ENCODE measurements at regions of chr1 and their contacts with region 1.

Region 1: DNA sequence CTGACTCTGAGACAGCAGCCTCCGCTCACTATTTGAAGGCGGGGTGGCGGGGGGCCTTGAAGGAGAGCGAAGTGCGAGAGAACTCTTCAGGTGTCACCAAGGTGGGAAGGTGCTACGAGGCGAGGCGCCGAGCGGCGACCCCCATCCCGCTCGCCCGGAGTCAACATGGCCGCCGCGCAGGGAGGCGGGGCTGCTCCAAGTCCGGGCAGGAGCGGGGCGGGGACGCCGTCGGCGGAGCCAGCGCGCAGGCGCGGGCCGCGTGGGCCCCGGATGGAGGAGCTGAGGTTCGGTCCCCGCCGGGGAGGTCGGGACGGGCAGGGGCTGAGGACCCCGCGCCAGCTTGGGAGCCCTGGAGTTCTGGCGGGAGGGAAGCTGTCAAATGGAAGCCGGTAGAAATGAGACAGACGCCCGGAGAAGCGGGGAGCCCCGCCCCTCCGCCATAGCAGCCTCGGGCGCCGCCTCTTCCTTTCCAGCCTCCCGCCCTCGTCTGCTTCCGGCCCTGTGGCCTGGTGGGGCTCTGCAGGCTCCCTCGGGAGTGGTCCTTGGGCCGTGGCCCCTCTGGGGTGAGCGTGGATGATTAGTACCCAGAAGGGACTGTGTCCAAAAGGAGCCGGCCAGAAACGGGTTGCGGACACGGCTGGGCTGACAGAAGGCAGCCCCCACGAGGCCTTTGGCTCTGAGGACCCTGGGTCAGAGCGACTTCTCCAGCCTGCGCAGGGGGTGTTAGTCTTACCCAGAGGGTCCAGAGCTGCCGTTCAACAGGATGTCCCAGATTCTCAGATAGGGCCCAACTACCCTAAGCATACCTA is at the start of gene PIGV:
- DNase-seq: peak; percentile 74 to 96 (median 90)
- ATAC-seq: peak; percentile 72 to 77
- H3K4me3 Mint-ChIP-seq: peak within 1 kb of the TSS; percentile 83 to 100 (median 98)
- H3K27ac Mint-ChIP-seq: peak within 1 kb of the TSS; percentile 99 to 100 (median 100)
- H3K4me1 Mint-ChIP-seq: peaks cover 44 to 80% (median 69%) of the 10 kb centered on the region in 4 donors
- H3K27me3 Mint-ChIP-seq: no peaks in the 10 kb centered on the region
- polyA plus RNA-seq, gene PIGV: 8.2 to 14.4 (median 9.6) TPM

Region 2: GRCh38 chr1:26284597-26285360 is 503.1 kb before region 1 on chr1:
- POLR2A ChIA-PET with region 1: no interaction called
- DNase-seq: peak; percentile 72 to 97 (median 88)
- ATAC-seq: peak; percentile 67 to 81
- H3K4me3 Mint-ChIP-seq: peak overlapping the region; percentile 68 to 95 (median 89)
- H3K27ac Mint-ChIP-seq: peak overlapping the region; percentile 96 to 100 (median 98)
- H3K4me1 Mint-ChIP-seq: peaks cover 55 to 94% (median 91%) of the 10 kb centered on the region in 4 donors
- H3K27me3 Mint-ChIP-seq: no peaks in the 10 kb centered on the region

Region 3: DNA sequence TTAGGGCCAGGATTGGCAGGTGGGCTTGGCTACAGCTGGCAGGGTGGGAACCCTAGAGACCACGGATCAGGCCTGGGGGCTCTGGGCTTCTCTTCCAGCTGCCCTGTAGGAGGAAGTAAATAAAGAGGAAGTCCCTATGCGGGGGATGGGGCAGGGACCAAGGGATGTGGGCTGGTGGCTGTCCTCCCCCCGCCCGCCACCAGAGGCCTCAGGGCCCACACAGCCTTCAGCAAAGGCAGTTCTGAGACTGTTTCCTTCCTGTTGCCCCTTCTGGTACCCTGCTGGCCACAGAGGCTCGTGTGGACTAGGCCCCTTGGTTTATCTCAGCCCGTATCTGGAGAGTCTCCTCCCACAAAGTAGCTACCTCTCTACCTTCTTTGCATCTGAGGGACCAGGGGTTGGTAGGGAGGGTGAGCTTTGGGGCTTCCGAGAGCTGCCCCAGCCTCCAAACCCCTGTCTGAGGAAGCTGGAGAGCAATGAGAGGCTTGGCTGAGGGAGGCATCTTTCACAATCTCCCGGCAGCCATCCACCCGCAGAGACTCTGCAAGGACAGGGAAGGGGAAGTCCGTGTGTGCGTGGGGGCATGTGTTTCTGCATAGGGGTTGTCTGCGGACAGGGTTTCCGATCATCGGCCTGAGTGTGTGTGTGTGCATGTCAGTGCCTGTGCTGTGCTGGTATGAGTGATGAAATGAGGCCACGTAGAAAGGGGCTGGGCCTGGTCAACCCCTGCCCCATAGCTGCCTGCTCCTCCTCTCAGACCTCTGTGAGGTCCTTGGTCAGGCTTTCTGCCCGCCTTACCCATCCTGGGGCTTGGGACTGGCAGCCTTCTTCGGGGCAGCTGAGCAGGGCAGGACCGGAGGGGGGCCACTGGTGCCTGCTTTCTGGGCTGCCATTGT is 245.8 kb before region 1 on chr1:
- POLR2A ChIA-PET with region 1: interaction called, 12 read pairs
- DNase-seq: peak; percentile 30 to 85 (median 69)
- ATAC-seq: peak; percentile 71
- H3K4me3 Mint-ChIP-seq: peak overlapping the region; percentile 74 to 91 (median 83)
- H3K27ac Mint-ChIP-seq: peak overlapping the region; percentile 91 to 99 (median 96)
- H3K4me1 Mint-ChIP-seq: peaks cover 51 to 96% (median 89%) of the 10 kb centered on the region in 4 donors
- H3K27me3 Mint-ChIP-seq: no peaks in the 10 kb centered on the region

Region 4: DNA sequence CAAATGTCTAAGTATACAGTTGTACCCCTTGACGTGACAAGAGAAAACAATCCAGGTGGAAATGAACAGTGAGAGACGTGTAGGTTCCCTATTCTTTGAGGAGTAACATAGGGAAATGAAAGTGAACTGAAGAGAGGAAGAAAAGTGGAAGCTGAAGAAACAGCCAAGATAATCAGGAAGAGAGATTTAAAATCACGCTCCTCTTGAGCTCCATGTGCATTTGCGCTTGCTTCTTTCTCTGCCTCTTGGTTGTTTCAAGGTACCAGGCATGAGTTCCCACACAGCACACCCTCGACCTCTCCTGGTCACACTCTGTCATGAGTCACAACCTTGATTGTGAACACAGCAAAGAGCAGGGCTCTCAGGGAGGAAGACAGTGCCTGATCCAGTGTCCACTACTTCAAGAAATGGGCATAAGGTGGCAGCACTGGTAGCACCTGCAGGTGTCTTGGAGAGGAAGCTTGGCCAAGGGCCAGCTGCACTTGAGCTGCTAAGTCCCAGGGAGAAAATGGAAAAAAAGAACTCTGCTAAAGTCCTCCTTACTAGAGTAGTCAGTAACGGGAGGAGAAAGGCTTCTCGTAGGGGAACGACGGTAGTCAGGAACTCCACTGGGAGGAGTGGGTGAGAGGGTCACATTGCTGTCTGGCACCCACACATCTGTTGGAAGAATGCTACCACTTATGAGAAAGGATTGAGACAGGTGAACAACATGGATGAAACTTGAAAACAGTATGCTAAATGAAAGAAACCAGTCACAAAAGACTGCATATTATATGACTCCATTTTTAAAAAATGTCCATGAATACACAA is 110.4 kb before region 1 on chr1:
- POLR2A ChIA-PET with region 1: interaction called, 20 read pairs
- DNase-seq: peak; percentile 36 to 84 (median 54)
- ATAC-seq: peak; percentile 97 to 99
- H3K4me3 Mint-ChIP-seq: peak overlapping the region; percentile 19 to 81 (median 54)
- H3K27ac Mint-ChIP-seq: peak overlapping the region; percentile 29 to 94 (median 78)
- H3K4me1 Mint-ChIP-seq: peaks cover 6 to 24% (median 19%) of the 10 kb centered on the region in 4 donors
- H3K27me3 Mint-ChIP-seq: no peaks in the 10 kb centered on the region

Region 5: GRCh38 chr1:26723013-26723991 is 64.6 kb before region 1 on chr1:
- POLR2A ChIA-PET with region 1: interaction called, 17 read pairs
- DNase-seq: peak; percentile 14 to 71 (median 35)
- ATAC-seq: peak; percentile 62 to 80
- H3K4me3 Mint-ChIP-seq: peak overlapping the region; percentile 61 to 88 (median 78)
- H3K27ac Mint-ChIP-seq: peak overlapping the region; percentile 4 to 93 (median 82)
- H3K4me1 Mint-ChIP-seq: peaks cover 48 to 96% (median 86%) of the 10 kb centered on the region in 4 donors
- H3K27me3 Mint-ChIP-seq: no peaks in the 10 kb centered on the region

Region 6: DNA sequence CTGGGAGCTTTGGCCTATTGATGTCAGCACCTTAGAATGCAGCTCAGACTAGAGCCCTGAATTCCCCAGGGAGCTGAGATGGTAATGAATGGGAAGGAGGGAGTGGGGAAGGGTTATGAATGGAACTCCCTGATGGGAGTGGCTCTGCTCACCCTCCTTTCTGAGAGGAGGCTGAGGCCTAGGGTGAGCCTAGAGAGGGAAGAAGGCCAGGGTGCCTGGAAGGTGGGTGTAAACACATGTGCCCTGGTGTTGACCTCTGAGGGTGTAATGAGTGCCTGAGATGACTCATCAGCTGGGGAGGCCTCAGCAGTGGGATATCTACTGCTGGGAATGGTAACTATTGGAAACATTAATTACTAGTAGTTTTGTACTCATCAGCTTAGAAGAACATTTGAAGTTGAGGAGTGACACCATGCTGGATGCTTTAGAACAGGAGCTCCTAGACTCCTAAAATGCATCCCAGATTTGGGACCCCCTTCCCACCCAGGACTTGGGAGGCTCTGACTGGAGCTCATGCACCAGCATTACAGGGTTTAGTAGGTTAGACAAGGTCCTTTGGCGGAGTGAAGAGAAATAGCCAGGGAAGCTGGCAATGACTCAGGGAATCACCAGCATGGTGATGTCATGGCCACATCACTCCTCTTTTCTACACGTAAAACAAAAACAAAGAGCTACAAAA is 16.1 kb before region 1 on chr1:
- POLR2A ChIA-PET with region 1: interaction called, 17 read pairs
- DNase-seq: no peak
- ATAC-seq: no peak
- H3K4me3 Mint-ChIP-seq: no peak overlapping the region
- H3K27ac Mint-ChIP-seq: peak overlapping the region in 9 of 10 donors; percentile 28 to 90 (median 76)
- H3K4me1 Mint-ChIP-seq: peaks cover 4 to 20% (median 8%) of the 10 kb centered on the region in 4 donors
- H3K27me3 Mint-ChIP-seq: no peaks in the 10 kb centered on the region

Region 7: DNA sequence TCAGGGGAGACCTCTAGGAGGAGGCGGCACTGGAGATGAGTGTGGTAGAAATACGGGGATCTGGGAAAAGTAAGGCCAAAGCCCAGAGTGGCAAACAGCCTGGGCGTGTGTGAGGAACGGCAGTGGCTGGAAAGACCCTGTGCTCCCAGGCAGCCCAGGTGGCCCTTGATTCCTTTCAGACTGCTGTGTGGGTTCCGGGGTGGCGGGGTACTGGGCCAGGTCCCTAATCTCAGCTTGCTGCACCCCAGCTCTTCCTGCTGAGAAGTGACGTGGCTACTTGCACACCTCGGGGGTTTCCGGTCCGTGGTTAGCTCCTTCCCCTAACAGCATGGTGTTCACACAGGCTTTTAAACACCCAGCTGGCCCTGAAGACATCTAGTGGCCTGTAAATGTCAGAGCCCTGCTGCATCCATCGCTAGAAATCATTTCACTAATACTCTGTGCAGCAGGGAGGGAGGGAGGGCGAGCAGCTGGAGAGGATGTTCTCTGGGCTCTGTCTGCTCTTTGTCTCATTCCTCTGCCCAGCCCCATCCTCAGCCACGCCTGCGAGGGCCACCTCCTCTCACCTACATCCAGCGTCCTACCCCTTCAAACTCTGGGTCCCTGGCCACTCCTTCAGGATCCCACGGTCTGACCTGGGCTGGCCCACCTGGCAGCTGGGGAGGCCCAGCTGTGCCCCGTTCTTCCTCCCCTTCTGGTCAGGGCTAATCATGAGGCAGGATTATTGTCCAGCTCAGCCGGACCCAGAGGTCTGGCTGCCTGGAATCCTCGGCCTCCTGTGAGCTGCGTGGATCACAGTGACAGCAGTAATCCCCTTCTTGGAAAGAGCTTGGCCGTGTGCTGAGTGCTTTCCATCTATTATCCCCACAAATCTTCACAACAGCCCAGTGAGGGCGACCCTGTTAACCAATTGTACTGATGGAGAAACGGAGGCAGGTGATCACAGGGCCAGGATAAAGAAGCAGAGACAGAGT is 45.8 kb after region 1 on chr1:
- POLR2A ChIA-PET with region 1: interaction called, 16 read pairs
- DNase-seq: peak; percentile 74 to 94 (median 90)
- ATAC-seq: peak; percentile 97 to 98
- H3K4me3 Mint-ChIP-seq: peak overlapping the region; percentile 69 to 90 (median 81)
- H3K27ac Mint-ChIP-seq: peak overlapping the region; percentile 97 to 100 (median 99)
- H3K4me1 Mint-ChIP-seq: peaks cover 42 to 71% (median 69%) of the 10 kb centered on the region in 4 donors
- H3K27me3 Mint-ChIP-seq: peaks cover 0 to 2% (median 0%) of the 10 kb centered on the region in 5 donors

Region 8: GRCh38 chr1:26874896-26875295 is 87.0 kb after region 1 on chr1:
- POLR2A ChIA-PET with region 1: no interaction called
- DNase-seq: no peak
- ATAC-seq: no peak
- H3K4me3 Mint-ChIP-seq: no peak overlapping the region
- H3K27ac Mint-ChIP-seq: no peak overlapping the region
- H3K4me1 Mint-ChIP-seq: peaks cover 0 to 3% (median 0%) of the 10 kb centered on the region in 4 donors
- H3K27me3 Mint-ChIP-seq: no peaks in the 10 kb centered on the region